ENCODE measurements at regions of chr20 and their contacts with region 1.

Region 1: GRCh38 chr20:50547964-50548363 is 37.8 kb downstream of the PTPN1 start:
- DNase-seq: no peak
- ATAC-seq: no peak
- H3K4me3 ChIP-seq: no peak overlapping the region
- H3K27ac ChIP-seq: no peak overlapping the region
- H3K4me1 ChIP-seq: no peaks in the 10 kb centered on the region; a peak in 2 of 5 replicates
- H3K27me3 ChIP-seq: no peaks in the 10 kb centered on the region
- CTCF ChIP-seq: no peak
- EP300 ChIP-seq: no peak
- POLR2A ChIP-seq: no peak
- RAD21 ChIP-seq: no peak

Region 2: GRCh38 chr20:50267041-50267865 is 280.7 kb before region 1 on chr20:
- CTCF ChIA-PET with region 1: no interaction called
- POLR2A ChIA-PET with region 1: no interaction called
- in situ Hi-C with region 1: no loop called
- intact Hi-C with region 1: no loop called
- DNase-seq: peak in 2 of 4 experiments; percentile 64 to 65
- ATAC-seq: no peak; the same call in 2 of the 3 replicates
- H3K4me3 ChIP-seq: no peak overlapping the region
- H3K27ac ChIP-seq: no peak overlapping the region
- H3K4me1 ChIP-seq: peaks cover 0 to 20% of the 10 kb centered on the region in 2 experiments; a peak in 3 of 5 replicates
- H3K27me3 ChIP-seq: no peaks in the 10 kb centered on the region
- CTCF ChIP-seq: no peak
- EP300 ChIP-seq: no peak
- POLR2A ChIP-seq: no peak
- RAD21 ChIP-seq: no peak

Region 3: GRCh38 chr20:50534567-50535551 is 13.1 kb before region 1 on chr20:
- CTCF ChIA-PET with region 1: no interaction called
- POLR2A ChIA-PET with region 1: interaction called, 11 read pairs
- in situ Hi-C with region 1: no loop called
- intact Hi-C with region 1: no loop called
- DNase-seq: no peak
- ATAC-seq: no peak; the same call in 2 of the 3 replicates
- H3K4me3 ChIP-seq: no peak overlapping the region
- H3K27ac ChIP-seq: no peak overlapping the region
- H3K4me1 ChIP-seq: peaks cover 0 to 5% of the 10 kb centered on the region in 2 experiments; a peak in 4 of 5 replicates
- H3K27me3 ChIP-seq: no peaks in the 10 kb centered on the region
- CTCF ChIP-seq: no peak
- EP300 ChIP-seq: no peak
- POLR2A ChIP-seq: no peak
- RAD21 ChIP-seq: no peak

Region 4: DNA sequence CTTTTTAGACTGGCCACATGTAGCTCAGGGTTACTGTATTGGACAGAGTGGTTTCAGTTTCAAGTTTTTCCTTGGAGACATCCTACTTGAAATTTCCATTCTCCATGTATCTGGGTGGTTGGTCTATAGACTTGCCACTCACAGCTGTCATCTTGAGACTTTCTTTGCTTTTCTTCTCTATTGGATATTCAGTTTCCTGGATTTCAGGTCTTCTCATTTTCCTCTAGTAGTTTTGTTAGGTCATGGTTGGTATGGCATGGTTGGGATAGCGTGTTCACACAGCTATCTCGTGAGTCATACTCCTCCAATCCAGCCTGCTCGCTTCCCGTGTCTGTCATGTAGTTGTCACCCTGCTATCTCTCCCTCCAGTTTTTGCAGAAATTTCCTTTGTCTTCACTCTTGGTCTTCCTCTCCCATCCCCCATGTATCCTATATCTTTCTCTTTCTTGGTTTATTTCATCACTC is 10.6 kb after region 1 on chr20:
- CTCF ChIA-PET with region 1: no interaction called
- POLR2A ChIA-PET with region 1: interaction called, 10 read pairs
- in situ Hi-C with region 1: no loop called
- intact Hi-C with region 1: no loop called
- DNase-seq: peak; percentile 63 to 89 (median 76)
- ATAC-seq: peak; percentile 95
- H3K4me3 ChIP-seq: no peak overlapping the region
- H3K27ac ChIP-seq: peak overlapping the region; percentile 85
- H3K4me1 ChIP-seq: peaks cover 4 to 7% of the 10 kb centered on the region in 2 experiments; a peak in 4 of 5 replicates
- H3K27me3 ChIP-seq: no peaks in the 10 kb centered on the region
- CTCF ChIP-seq: no peak
- EP300 ChIP-seq: peak; percentile 57; the same call in 1 of the 2 replicates
- POLR2A ChIP-seq: no peak
- RAD21 ChIP-seq: no peak

Region 5: GRCh38 chr20:50610221-50610620 is 62.3 kb after region 1 on chr20:
- CTCF ChIA-PET with region 1: no interaction called
- POLR2A ChIA-PET with region 1: no interaction called
- in situ Hi-C with region 1: no loop called
- intact Hi-C with region 1: no loop called
- DNase-seq: no peak
- ATAC-seq: no peak
- H3K4me3 ChIP-seq: no peak overlapping the region
- H3K27ac ChIP-seq: no peak overlapping the region
- H3K4me1 ChIP-seq: no peaks in the 10 kb centered on the region; a peak in 1 of 5 replicates
- H3K27me3 ChIP-seq: no peaks in the 10 kb centered on the region
- CTCF ChIP-seq: no peak
- EP300 ChIP-seq: no peak
- POLR2A ChIP-seq: no peak
- RAD21 ChIP-seq: no peak

Region 6: GRCh38 chr20:50680412-50680908 is 132.5 kb after region 1 on chr20:
- CTCF ChIA-PET with region 1: no interaction called
- POLR2A ChIA-PET with region 1: no interaction called
- in situ Hi-C with region 1: no loop called
- intact Hi-C with region 1: no loop called
- DNase-seq: no peak
- ATAC-seq: peak; percentile 35; the same call in 1 of the 3 replicates
- H3K4me3 ChIP-seq: no peak overlapping the region
- H3K27ac ChIP-seq: peak overlapping the region; percentile 1; the same call in 1 of the 3 replicates
- H3K4me1 ChIP-seq: peaks cover 26% of the 10 kb centered on the region in 2 experiments
- H3K27me3 ChIP-seq: no peaks in the 10 kb centered on the region
- CTCF ChIP-seq: no peak
- EP300 ChIP-seq: no peak
- POLR2A ChIP-seq: no peak
- RAD21 ChIP-seq: no peak